PC-3 (cell line): ENCODE measurements at regions of chr10 and their contacts with region 1.

Region 1: GRCh38 chr10:59906417-59907202 is at the start of gene CCDC6:
- DNase-seq: peak; percentile 98
- ATAC-seq: peak; percentile 77
- H3K4me3 ChIP-seq: peak within 1 kb of the TSS; percentile 93
- H3K27ac ChIP-seq: peak within 1 kb of the TSS; percentile 70
- H3K4me1 ChIP-seq: peaks cover 45% of the 10 kb centered on the region
- H3K27me3 ChIP-seq: no peaks in the 10 kb centered on the region
- CTCF ChIP-seq: peak; percentile 77
- total RNA-seq, gene CCDC6: 37.6 and 46.1 TPM in 2 replicates

Region 2: DNA sequence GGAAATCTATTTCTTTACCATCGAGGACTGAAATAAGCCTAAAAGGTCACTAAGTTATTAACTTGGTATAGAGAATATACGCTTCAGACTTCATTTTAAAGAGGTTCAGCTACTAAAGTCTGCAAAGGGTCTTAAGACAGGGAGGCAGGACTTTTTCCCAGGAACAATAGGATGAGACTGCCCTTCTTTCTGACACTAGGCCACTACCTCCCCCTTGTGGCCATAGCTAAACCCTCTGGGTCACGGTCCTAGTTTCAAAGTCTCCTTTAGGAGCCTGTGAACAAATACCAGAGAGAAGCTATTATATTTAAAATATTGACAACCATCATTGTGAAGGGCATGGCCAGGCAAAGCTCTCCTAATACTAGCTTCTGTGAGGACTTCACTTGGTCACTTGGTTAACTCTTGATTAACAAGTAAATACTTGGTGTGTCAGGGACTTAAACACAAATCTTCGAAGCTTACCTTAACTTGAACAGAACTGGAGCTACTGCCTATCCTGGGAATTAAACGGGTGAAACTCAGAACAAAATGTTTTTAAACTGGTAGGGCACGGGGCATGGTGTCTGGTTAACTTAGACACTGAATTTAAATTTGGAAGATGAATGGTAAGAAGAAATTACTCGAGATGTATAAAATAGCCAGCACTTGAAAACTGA is 75.9 kb before region 1 on chr10:
- CTCF ChIA-PET with region 1: interaction called, 10 read pairs
- POLR2A ChIA-PET with region 1: no interaction called
- intact Hi-C with region 1: no loop called
- DNase-seq: peak; percentile 88
- ATAC-seq: peak; percentile 92
- H3K4me3 ChIP-seq: no peak overlapping the region
- H3K27ac ChIP-seq: no peak overlapping the region
- H3K4me1 ChIP-seq: no peaks in the 10 kb centered on the region
- H3K27me3 ChIP-seq: no peaks in the 10 kb centered on the region
- CTCF ChIP-seq: peak; percentile 98

Region 3: GRCh38 chr10:59965976-59966650 is 59.5 kb after region 1 on chr10:
- CTCF ChIA-PET with region 1: no interaction called
- POLR2A ChIA-PET with region 1: interaction called, 3 read pairs
- intact Hi-C with region 1: loop called (anchors 1 kb)
- DNase-seq: no peak
- ATAC-seq: no peak
- H3K4me3 ChIP-seq: peak overlapping the region; percentile 4; the same call in 1 of the 2 replicates
- H3K27ac ChIP-seq: peak overlapping the region; percentile 64
- H3K4me1 ChIP-seq: peaks cover 48% of the 10 kb centered on the region
- H3K27me3 ChIP-seq: no peaks in the 10 kb centered on the region
- CTCF ChIP-seq: no peak

Region 4: DNA sequence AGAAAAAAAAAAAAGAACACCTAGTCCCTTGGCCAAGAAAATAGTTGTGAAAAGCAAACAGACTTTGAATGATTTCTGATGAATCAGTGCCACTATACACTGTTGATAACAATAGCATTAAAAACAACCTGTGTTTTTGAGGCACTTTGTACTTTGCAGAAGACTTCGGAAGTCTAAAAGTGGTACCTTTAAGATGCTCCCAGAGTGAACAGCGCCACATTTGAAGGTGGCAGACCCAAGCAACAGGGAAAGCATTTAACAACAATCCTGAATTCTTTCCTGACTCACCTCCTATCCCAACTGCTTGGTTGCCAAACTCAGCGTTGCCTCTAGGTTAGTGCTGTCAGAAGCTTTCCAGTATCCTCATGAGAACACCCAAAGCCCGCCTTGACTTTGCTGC is 102.2 kb after region 1 on chr10:
- CTCF ChIA-PET with region 1: no interaction called
- POLR2A ChIA-PET with region 1: interaction called, 3 read pairs
- intact Hi-C with region 1: loop called (anchors 1 kb)
- DNase-seq: peak; percentile 74
- ATAC-seq: peak; percentile 79
- H3K4me3 ChIP-seq: no peak overlapping the region
- H3K27ac ChIP-seq: peak overlapping the region; percentile 48
- H3K4me1 ChIP-seq: peaks cover 17% of the 10 kb centered on the region
- H3K27me3 ChIP-seq: no peaks in the 10 kb centered on the region
- CTCF ChIP-seq: peak; percentile 60

Region 5: DNA sequence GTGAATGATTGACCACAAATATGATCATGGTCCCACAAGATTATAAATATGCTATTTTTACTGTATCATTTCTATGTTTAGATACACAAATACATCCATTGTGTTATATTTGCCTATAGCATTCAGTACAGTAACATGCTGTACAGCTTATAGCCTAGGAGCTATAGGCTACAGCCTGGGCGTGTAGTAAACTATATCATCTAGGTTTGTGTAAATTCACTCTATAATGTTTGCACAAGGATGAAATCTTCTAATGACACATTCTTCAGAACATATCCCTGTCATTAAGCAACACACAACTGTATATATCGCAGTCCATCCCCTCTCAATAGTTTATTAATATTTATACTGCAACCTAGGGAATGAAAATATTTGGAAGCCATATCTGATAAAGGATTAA is 780.3 kb after region 1 on chr10:
- CTCF ChIA-PET with region 1: no interaction called
- POLR2A ChIA-PET with region 1: no interaction called
- intact Hi-C with region 1: no loop called
- DNase-seq: no peak
- ATAC-seq: peak; percentile 50; the same call in 1 of the 2 replicates
- H3K4me3 ChIP-seq: no peak overlapping the region
- H3K27ac ChIP-seq: no peak overlapping the region
- H3K4me1 ChIP-seq: no peaks in the 10 kb centered on the region
- H3K27me3 ChIP-seq: no peaks in the 10 kb centered on the region
- CTCF ChIP-seq: no peak